Dendritic cell treated with granulocyte-macrophage colony-stimulating factor and Interleukin-4, amounts not matched to agents 40 ng/mL and 50 ng/mL, for 4 days (primary cell): ENCODE measurements at regions of chr4 and their contacts with region 1.

Region 1: DNA sequence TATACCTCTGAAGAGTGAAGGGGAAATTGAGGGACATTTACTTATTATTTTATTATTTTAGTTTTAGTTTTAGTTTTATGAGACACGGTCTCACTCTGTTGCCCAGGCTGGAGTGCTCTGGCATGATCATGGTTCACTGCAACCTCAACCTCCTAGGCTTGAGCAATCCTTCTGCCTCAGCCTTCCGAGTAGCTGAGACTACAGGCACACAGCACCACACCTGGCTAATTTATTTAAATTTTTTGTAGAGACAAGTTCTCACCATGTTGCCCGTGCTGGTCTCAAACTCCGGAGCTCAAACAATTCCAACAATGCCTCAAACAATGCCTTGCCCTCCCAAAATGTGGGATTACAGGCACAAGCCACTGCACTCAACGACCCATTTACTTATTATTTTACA is 68.4 kb upstream of the BMP2K start:
- H3K4me3 Mint-ChIP-seq: no peak overlapping the region
- H3K27ac Mint-ChIP-seq: no peak overlapping the region
- H3K4me1 Mint-ChIP-seq: peaks cover 23% of the 10 kb centered on the region
- H3K27me3 Mint-ChIP-seq: no peaks in the 10 kb centered on the region

Region 2: GRCh38 chr4:78691971-78692821 is 15.6 kb before region 1 on chr4:
- intact Hi-C with region 1: loop called (anchors 2 kb)
- H3K4me3 Mint-ChIP-seq: no peak overlapping the region
- H3K27ac Mint-ChIP-seq: peak overlapping the region; percentile 63
- H3K4me1 Mint-ChIP-seq: peaks cover 38% of the 10 kb centered on the region
- H3K27me3 Mint-ChIP-seq: no peaks in the 10 kb centered on the region